Panc1 (cell line): ENCODE measurements at regions of chr6 and their contacts with region 1.

Region 1: DNA sequence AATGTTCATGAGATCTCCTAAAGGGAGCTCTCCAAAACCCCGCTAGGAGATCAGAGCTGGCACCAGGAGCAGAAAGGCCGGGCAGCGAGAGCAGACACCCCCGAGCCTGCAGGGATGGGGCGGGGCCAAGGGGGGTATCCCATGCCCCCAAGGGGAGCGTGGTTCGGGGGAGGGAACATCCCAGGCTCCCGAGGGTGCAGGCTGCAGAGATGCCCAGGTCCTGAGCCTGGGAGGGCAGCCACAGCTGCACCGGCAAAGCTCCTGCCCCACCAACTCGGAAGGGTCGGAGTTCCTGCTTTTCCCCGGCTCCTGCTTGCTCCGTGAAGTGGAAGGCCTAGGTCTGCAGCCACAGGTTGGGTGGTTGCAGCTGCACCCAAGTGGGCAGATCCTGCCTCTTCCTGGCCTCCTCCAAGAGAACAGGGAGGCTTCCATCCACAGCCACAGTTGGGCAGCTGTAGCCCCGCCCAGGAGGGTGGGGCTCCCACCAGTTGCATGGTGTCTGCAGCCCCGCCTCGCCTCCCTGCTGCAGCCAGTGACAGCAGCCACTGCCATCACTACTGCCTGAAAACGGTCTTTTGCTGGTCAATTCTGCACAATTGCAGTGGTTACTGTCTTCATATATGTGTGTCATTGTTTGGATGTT is 13.4 kb upstream of the GMNN start:
- DNase-seq: no peak
- ATAC-seq: peak; percentile 79
- H3K4me3 ChIP-seq: no peak overlapping the region
- H3K27ac ChIP-seq: no peak overlapping the region
- H3K4me1 ChIP-seq: no peaks in the 10 kb centered on the region
- H3K27me3 ChIP-seq: no peaks in the 10 kb centered on the region
- CTCF ChIP-seq: no peak

Region 2: DNA sequence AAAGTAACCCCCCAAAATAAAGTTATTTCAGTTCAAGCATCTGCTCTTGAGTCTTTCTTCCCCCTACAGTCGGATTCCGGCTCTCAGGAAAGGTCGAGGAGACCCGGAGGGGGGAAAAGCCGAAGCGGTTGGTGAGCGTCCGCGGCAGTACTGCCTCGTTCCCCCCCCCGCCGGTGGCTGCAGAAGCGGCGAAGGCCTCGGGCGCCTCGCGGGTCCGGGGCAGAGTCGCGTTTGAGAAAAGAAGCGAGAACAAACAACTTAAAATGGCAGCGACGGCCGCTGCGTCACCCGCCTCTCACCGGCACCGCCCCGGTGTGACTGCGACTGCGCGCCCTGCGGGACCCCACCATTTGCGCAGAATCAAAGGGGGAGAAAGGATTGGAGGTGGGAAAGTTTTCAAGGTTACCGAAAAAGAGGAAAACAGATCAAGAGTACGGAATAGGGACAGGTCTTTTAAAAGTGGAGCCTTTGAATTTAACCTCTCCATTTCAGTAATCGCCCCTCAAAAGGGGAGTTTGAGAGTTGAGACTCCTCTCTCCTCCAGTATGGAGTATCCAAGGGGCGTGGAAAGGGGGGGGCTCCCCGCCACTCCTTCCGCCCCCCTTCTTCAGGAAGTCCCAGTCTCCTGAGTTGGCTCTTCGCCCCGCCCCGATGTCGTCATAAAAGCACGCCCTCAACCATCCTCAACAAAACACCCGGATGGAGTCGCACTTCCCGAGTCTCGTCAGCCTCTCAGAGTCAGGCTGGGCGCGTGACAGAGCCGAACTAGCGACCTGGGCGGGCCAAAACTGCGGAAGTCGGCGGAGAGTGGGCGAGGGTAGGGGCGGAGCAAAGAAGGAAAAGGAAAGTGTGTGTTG is 40.5 kb before region 1 on chr6:
- CTCF ChIA-PET with region 1: no interaction called
- POLR2A ChIA-PET with region 1: interaction called, 9 read pairs
- in situ Hi-C with region 1: no loop called
- intact Hi-C with region 1: loop called (anchors 5 kb)
- DNase-seq: peak; percentile 98
- ATAC-seq: peak; percentile 98
- H3K4me3 ChIP-seq: peak overlapping the region; percentile 88 to 93
- H3K27ac ChIP-seq: peak overlapping the region; percentile 98
- H3K4me1 ChIP-seq: peaks cover 16% of the 10 kb centered on the region
- H3K27me3 ChIP-seq: no peaks in the 10 kb centered on the region
- CTCF ChIP-seq: no peak